Activated CD4-positive, alpha-beta T cell treated with anti-CD3 and anti-CD28 coated beads, Interleukin-2, amount 10 ng/mL, durations not matched to agents 24 days and 14 days (primary cell): ENCODE measurements at regions of chr10 and their contacts with region 1.

Region 1: GRCh38 chr10:96831867-96832720 is at the start of gene LCOR:
- DNase-seq: peak; percentile 93
- H3K4me3 Mint-ChIP-seq: peak within 1 kb of the TSS; percentile 93
- H3K27ac Mint-ChIP-seq: peak within 1 kb of the TSS; percentile 95
- H3K4me1 Mint-ChIP-seq: peaks cover 36% of the 10 kb centered on the region
- H3K27me3 Mint-ChIP-seq: peaks cover 3% of the 10 kb centered on the region
- total RNA-seq, gene LCOR: 20.5 and 22.6 TPM in 2 replicates

Region 2: GRCh38 chr10:96061232-96061631 is 770.9 kb before region 1 on chr10:
- intact Hi-C with region 1: no loop called
- DNase-seq: no peak
- H3K4me3 Mint-ChIP-seq: no peak overlapping the region
- H3K27ac Mint-ChIP-seq: no peak overlapping the region
- H3K4me1 Mint-ChIP-seq: peaks cover 33% of the 10 kb centered on the region
- H3K27me3 Mint-ChIP-seq: no peaks in the 10 kb centered on the region

Region 3: DNA sequence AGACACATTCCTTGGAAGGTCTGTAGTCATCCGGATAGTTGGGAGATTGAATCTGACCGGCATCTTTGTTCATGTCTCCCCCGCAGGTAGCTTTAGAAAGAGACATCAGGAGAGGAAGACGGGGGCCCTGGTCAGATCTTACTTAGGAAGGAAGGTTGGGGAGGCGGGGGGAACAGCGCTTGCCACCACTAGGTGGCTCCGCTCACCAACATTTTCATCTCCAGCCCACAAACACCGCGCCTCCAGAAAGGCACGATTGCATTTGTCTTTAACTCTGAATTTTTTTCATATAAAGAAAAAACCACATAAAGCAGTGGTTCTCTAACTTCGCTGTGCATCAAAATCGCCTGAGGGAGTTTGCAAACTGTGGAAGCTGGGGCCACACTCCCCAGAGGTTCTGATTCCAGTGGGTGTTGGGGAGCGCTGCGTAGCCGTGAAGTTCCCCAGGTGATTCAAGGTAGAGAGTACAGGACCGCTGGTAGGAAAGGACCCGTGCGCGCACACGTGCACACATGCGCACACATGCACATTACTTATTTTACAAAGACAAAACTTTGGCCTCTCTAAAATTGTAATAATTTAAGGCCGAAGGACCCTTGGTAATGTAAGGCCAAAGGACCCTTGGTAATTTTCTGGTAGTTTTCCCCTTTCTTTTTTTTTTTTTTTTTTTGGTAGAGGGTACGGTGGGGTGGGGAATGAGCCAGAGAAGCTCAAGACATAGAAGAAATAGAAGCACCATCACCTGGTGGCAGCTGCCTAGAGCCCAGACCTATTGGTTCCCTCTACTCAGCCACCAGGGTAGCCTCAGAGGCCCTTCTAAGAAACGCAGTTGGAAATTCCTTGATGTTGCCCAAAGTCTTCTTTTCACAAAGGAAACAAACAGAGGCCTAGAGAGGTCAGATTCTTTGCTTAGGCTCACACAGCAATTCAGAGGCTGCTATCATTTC is 435.9 kb before region 1 on chr10:
- intact Hi-C with region 1: loop called (anchors 1 kb)
- DNase-seq: peak; percentile 84
- H3K4me3 Mint-ChIP-seq: no peak overlapping the region
- H3K27ac Mint-ChIP-seq: no peak overlapping the region
- H3K4me1 Mint-ChIP-seq: peaks cover 2% of the 10 kb centered on the region
- H3K27me3 Mint-ChIP-seq: peaks cover 28% of the 10 kb centered on the region

Region 4: GRCh38 chr10:96586419-96587263 is 245.5 kb before region 1 on chr10 and contains the start of gene TM9SF3:
- intact Hi-C with region 1: loop called (anchors 2 kb)
- DNase-seq: peak; percentile 97
- H3K4me3 Mint-ChIP-seq: peak within 1 kb of the TSS; percentile 93
- H3K27ac Mint-ChIP-seq: peak within 1 kb of the TSS; percentile 91
- H3K4me1 Mint-ChIP-seq: peaks cover 25% of the 10 kb centered on the region
- H3K27me3 Mint-ChIP-seq: peaks cover 13% of the 10 kb centered on the region
- total RNA-seq, gene TM9SF3: 84.5 and 86.1 TPM in 2 replicates

Region 5: GRCh38 chr10:96690755-96691731 is 141.1 kb before region 1 on chr10:
- intact Hi-C with region 1: loop called (anchors 2 kb)
- DNase-seq: no peak
- H3K4me3 Mint-ChIP-seq: no peak overlapping the region
- H3K27ac Mint-ChIP-seq: no peak overlapping the region
- H3K4me1 Mint-ChIP-seq: peaks cover 31% of the 10 kb centered on the region
- H3K27me3 Mint-ChIP-seq: no peaks in the 10 kb centered on the region

Region 6: GRCh38 chr10:96765406-96766240 is 66.5 kb before region 1 on chr10:
- intact Hi-C with region 1: loop called (anchors 1 kb)
- DNase-seq: peak; percentile 89
- H3K4me3 Mint-ChIP-seq: no peak overlapping the region
- H3K27ac Mint-ChIP-seq: no peak overlapping the region
- H3K4me1 Mint-ChIP-seq: no peaks in the 10 kb centered on the region
- H3K27me3 Mint-ChIP-seq: peaks cover 11% of the 10 kb centered on the region

Region 7: DNA sequence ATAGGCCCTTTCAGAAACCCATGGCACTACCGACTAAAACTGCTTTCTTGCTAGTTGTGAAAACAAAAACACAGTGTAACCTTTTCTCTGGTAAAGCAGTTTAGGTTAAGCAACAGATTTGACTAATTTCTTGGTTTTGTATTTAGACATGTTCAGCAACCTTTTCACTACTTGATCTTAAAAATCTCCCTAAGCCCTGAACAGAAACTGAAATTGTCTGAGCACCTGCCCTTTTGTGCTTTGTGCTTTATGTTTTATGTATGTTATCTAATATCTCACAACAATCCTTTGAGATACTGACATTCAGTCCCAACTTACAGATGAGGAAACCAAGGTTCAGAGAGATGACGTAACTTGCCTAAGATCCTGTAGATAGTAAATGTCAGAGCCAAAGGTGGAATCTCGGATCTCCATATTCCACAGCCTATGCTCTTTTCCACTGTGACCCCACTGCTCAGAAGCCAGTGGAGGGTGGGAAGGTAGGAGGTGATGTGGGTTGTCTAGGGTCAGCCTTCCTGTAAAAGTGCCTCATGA is 146.6 kb after region 1 on chr10:
- intact Hi-C with region 1: loop called (anchors 2 kb)
- DNase-seq: no peak
- H3K4me3 Mint-ChIP-seq: peak overlapping the region; percentile 53
- H3K27ac Mint-ChIP-seq: peak overlapping the region; percentile 91
- H3K4me1 Mint-ChIP-seq: peaks cover 23% of the 10 kb centered on the region
- H3K27me3 Mint-ChIP-seq: no peaks in the 10 kb centered on the region

Region 8: DNA sequence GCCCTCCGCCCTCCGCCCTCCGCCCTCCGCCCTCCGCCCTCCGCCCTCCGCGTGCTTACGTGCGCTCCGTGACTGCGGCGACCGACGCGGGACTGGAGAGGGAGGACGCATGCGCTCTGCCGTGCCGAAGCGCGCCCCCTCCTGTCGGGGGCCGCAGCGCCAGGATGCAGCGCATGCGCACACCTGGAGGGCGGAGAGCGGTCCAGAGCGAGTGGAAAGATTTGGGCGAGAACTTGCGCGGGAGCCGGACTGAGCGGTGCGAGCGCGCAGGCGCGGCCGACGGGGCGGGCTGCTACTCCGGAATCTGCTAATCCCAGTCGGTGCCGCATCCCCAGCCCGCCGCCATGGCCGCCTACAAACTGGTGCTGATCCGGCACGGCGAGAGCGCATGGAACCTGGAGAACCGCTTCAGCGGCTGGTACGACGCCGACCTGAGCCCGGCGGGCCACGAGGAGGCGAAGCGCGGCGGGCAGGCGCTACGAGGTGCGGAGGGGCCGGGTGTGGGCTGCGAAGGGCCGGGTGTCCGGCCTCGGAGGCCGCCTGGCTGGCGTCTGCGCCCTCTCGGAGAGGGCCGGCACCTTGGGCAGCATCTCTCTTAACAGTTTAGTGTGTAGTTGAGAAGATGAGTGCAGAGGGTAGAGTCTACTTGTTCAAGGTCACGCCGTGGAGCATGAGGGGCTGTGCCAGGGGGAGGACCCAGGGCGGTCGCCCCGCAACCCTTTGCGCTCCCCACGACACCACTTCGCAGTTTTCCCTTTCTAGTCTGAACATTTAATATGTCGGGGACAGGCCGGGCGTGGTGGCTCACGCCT is 594.1 kb after region 1 on chr10 and contains the start of gene PGAM1:
- intact Hi-C with region 1: loop called (anchors 10 kb)
- DNase-seq: peak; percentile 99
- H3K4me3 Mint-ChIP-seq: peak within 1 kb of the TSS; percentile 94
- H3K27ac Mint-ChIP-seq: peak within 1 kb of the TSS; percentile 97
- H3K4me1 Mint-ChIP-seq: peaks cover 46% of the 10 kb centered on the region
- H3K27me3 Mint-ChIP-seq: peaks cover 2% of the 10 kb centered on the region
- total RNA-seq, gene PGAM1: 1,086 and 1,108 TPM in 2 replicates